CD8-positive, alpha-beta T cell (primary cell): ENCODE measurements at regions of chr3 and their contacts with region 1.

Region 1: DNA sequence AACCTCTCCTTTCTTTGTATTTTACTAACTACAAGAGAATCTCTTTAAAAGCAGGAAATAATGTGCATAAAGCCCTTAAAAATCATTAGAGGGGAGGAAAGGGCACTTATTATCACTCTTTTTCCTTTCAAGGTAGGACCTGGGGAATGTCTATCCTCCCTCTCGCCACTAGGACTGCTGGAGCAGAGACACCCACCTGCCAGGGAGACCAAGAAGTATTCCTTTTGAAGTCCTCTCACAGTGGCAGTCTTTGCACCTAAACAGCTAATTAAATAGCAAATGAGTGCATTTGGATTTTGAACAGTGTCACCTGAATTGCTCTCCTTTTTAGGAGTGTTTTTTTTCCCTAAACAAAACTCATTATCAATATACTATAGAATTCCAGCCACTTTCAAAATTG is 874.1 kb downstream of the ZPLD1 start:
- DNase-seq: no peak
- ATAC-seq: no peak
- H3K4me3 ChIP-seq: no peak overlapping the region
- H3K4me3 Mint-ChIP-seq: no peak overlapping the region
- H3K27ac ChIP-seq: no peak overlapping the region
- H3K27ac Mint-ChIP-seq: no peak overlapping the region
- H3K4me1 ChIP-seq: no peaks in the 10 kb centered on the region
- H3K4me1 Mint-ChIP-seq: no peaks in the 10 kb centered on the region
- H3K27me3 ChIP-seq: no peaks in the 10 kb centered on the region
- H3K27me3 Mint-ChIP-seq: no peaks in the 10 kb centered on the region
- CTCF ChIP-seq: no peak

Region 2: GRCh38 chr3:102941761-102942160 is 367.2 kb before region 1 on chr3:
- CTCF ChIA-PET with region 1: no interaction called
- POLR2A ChIA-PET with region 1: no interaction called
- intact Hi-C with region 1: no loop called
- DNase-seq: no peak
- ATAC-seq: no peak
- H3K4me3 ChIP-seq: no peak overlapping the region
- H3K4me3 Mint-ChIP-seq: no peak overlapping the region
- H3K27ac ChIP-seq: no peak overlapping the region
- H3K27ac Mint-ChIP-seq: no peak overlapping the region
- H3K4me1 ChIP-seq: no peaks in the 10 kb centered on the region
- H3K4me1 Mint-ChIP-seq: no peaks in the 10 kb centered on the region
- H3K27me3 ChIP-seq: no peaks in the 10 kb centered on the region
- H3K27me3 Mint-ChIP-seq: no peaks in the 10 kb centered on the region
- CTCF ChIP-seq: no peak

Region 3: DNA sequence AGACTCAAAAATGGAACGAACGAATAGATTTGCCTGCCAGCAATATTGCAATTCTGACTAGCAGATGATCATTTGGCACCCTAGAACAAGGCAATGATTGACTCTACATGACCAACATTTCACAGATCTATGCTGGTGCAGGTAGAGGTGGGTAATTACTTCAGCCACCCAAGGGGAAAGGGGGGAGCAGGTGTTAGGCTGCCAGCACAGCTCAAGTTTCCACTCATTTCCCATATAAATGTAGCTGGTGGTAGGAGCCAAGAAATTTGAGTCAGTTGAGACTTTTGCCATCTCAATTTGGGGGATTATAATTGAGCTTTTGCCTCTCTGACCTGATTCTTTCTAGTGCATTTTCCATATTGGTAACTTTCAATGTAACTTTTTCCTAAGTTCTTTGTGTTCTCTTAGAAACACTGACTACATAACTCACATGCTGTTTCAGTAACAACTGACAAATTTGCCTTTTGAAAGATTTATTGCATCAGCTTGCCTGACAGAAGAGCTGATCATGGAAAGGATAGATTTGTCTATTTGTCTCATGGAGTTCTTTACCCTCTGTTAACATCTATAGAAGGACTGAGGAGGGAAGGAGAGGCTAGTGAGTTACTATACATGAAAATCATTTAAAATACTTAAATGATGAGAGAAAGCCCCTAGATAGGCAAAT is 28.4 kb after region 1 on chr3:
- CTCF ChIA-PET with region 1: no interaction called
- POLR2A ChIA-PET with region 1: no interaction called
- intact Hi-C with region 1: loop called in 1 of 2 experiments (anchors 1 kb)
- DNase-seq: no peak
- ATAC-seq: no peak
- H3K4me3 ChIP-seq: no peak overlapping the region
- H3K4me3 Mint-ChIP-seq: no peak overlapping the region
- H3K27ac ChIP-seq: no peak overlapping the region
- H3K27ac Mint-ChIP-seq: no peak overlapping the region
- H3K4me1 ChIP-seq: no peaks in the 10 kb centered on the region
- H3K4me1 Mint-ChIP-seq: no peaks in the 10 kb centered on the region
- H3K27me3 ChIP-seq: no peaks in the 10 kb centered on the region
- H3K27me3 Mint-ChIP-seq: no peaks in the 10 kb centered on the region
- CTCF ChIP-seq: no peak